ENCODE measurements at regions of chr5 and their contacts with region 1.

Region 1: DNA sequence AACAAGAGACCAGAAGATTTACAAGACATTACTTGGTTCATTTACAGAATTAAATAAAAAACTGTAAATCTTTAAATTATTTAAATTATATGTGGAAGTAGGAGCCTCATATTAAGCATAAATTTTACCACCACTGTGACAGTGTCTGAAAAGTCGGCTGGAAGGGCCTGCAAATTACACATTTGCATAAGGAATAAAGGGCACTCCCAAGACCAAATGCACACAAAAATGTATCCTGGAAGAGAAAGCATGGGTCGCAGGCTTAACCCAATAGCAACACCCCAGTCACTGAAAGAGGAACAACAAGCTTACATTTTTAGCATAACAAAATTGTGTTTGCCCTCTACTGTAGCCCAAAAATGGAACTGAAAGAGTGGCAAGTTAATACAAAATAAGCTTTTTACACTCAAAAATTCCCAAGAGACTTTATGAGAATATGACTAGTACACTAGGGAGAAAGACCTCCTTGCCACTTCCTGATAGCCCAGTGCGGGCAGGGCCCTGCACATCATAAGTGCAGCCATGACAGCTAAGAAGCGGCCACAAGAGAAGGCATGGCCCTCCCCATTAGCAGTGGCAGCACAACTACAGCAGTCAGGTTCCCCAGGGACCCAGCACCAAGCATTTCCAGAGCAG is 482.0 kb downstream of the DTWD2 start:
- DNase-seq: peak; percentile 42

Region 2: DNA sequence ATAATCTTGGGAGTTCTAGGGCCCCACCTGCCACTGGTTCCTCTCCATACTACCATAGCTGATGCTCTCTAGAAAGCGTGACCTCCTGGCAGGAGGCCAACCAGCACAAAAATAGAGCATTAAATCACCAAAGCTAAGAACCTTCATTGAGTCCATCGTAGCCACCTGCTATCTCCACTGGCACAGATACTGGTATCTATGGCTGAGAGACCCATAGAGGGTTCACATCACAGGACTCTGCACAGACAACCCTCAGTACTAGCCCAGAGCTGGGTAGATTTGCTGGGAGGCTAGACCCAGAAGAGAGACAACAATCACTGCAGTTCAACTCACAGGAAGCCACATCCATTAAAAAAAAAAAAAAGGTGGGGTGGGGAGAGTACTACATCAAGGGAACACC is 27.1 kb before region 1 on chr5:
- intact Hi-C with region 1: loop called in 1 of 2 experiments (anchors 1 kb)
- DNase-seq: no peak

Region 3: DNA sequence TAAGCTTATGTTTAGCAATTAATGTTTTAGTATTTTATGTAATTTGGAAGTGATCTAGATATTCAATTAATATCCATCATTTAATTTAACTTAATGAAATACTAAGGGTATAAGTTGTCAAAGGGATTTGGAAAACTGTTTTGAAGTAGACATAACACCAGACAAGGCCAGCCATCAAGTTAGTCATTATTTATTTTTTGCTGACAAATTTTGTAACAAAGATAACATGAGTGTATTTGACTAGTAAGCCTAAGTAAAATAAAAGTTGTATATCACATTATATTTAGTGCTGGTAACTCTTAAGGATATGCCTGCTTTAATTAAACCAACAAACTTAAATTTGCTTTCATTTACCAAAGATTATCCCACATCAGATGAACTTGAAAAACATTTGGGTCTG is 723.6 kb after region 1 on chr5:
- intact Hi-C with region 1: no loop called
- DNase-seq: no peak

Measured in posterior vena cava (tissue), 2 donors.